PC-9 (cell line): ENCODE measurements at regions of chr2 and their contacts with region 1.

Region 1: DNA sequence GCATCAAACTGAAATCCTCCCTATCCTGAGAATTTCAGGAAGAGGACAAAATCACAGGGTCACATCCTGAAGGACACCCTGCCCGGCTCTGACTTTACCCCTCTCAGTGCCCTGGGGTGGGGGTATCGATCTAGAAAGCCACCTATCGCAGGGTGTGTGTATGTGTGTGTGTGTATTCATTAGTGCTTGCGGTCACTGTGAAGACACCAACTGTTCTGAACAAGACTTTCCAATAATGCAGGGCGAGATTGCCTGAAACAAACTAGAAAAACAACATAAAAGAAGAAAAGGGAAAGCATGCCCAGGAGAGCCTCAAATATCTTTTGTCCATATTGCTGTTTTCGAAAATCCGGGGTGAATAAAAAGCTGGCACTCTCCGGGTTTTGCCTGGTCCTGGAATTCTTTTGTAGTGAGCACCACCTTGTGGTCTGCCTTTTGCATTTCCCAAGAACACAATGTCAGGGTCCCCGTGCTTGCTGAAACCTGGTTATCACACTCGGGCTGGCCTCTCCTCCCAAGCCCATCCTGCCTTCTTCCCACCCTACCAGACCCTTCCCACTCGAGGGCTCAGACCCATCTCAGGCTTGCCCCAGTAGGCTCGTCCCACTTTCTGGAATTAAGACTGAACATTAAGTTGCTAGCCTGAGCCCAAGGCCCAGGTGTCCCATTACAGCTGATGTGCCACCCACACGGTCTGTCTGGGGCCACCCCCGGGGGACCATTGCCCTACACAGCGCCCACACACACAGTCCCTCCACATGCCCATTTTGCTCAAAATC is 25.0 kb upstream of the COPS8 start:
- DNase-seq: peak; percentile 55 to 61
- H3K4me3 ChIP-seq: no peak overlapping the region
- H3K27ac ChIP-seq: no peak overlapping the region
- H3K4me1 ChIP-seq: no peaks in the 10 kb centered on the region
- H3K27me3 ChIP-seq: peaks cover 49% of the 10 kb centered on the region
- CTCF ChIP-seq: peak; percentile 83

Region 2: GRCh38 chr2:235779444-235779896 is 1281.3 kb before region 1 on chr2:
- CTCF ChIA-PET with region 1: interaction called, 3 read pairs
- POLR2A ChIA-PET with region 1: no interaction called
- intact Hi-C with region 1: loop called (anchors 5 kb)
- DNase-seq: peak; percentile 66 to 87
- H3K4me3 ChIP-seq: no peak overlapping the region
- H3K27ac ChIP-seq: no peak overlapping the region
- H3K4me1 ChIP-seq: no peaks in the 10 kb centered on the region
- H3K27me3 ChIP-seq: no peaks in the 10 kb centered on the region
- CTCF ChIP-seq: peak; percentile 93

Region 3: DNA sequence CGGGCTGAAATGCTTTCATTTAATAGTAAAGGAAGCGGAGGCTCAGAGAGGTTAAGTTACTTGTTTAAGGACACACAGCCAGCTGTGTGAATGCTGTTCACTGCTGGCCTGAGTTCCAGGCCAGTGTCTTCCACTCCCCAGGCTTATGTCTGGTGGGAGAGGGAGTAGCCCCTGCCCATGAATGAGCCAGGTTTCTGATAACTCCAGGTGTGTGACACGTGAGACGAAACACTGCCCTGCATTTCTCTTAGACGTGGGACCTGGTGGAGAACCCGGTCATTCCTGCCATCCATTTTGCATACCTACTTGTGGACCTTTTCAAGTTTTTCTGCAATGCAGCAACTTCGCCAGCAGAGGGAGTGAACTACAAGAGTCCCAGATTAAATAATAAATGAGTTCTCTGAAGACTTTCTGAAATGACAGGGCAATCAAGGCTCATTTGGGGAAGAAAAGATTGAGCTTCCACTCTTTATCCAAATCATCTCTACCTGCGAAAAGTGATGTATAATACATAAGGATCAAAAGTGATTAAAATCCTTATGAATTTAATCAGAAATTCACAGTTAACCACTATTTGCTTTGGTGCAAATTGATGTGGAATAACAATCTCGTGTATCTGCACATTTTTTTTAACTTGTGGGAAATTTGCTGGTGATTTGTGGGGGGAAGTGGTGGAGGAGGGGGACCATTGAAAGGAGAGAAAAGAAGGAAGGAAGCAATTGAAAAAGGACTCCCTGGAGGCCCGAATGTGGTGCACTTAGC is 717.1 kb before region 1 on chr2:
- CTCF ChIA-PET with region 1: interaction called, 4 read pairs
- POLR2A ChIA-PET with region 1: no interaction called
- intact Hi-C with region 1: loop called (anchors 1 kb)
- DNase-seq: peak; percentile 60 to 65
- H3K4me3 ChIP-seq: no peak overlapping the region
- H3K27ac ChIP-seq: no peak overlapping the region
- H3K4me1 ChIP-seq: no peaks in the 10 kb centered on the region
- H3K27me3 ChIP-seq: peaks cover 84% of the 10 kb centered on the region
- CTCF ChIP-seq: peak; percentile 95

Region 4: GRCh38 chr2:236352761-236353593 is 707.7 kb before region 1 on chr2:
- CTCF ChIA-PET with region 1: interaction called, 4 read pairs
- POLR2A ChIA-PET with region 1: no interaction called
- intact Hi-C with region 1: loop called (anchors 1 kb)
- DNase-seq: peak in 1 of 2 experiments; percentile 27
- H3K4me3 ChIP-seq: no peak overlapping the region
- H3K27ac ChIP-seq: no peak overlapping the region
- H3K4me1 ChIP-seq: no peaks in the 10 kb centered on the region
- H3K27me3 ChIP-seq: peaks cover 48% of the 10 kb centered on the region
- CTCF ChIP-seq: peak; percentile 98

Region 5: DNA sequence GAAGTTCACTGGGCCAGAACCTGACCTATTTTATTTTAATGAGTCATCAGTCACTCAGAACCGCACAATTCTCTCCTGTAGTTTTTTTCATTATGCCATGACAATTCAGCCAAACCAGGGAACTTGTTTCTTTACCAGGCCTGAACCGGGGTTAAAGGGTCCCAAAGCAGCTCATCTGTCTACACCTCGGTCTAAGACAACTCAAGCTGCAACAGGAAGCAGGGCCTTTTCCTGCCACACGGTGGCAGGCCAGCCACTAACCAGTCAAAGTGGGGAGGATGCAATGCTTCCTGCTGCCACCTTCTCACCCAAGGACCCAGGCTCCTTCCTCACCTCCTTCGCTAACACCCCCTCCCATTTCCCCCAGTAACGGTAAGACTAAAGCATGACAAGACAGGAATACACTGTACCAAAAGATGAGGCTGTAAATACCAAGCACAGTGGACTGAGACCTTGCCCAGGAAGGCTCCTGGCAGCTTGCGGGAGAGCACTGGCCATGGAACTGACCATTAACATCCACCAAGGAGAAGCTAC is 547.8 kb before region 1 on chr2:
- CTCF ChIA-PET with region 1: no interaction called
- POLR2A ChIA-PET with region 1: no interaction called
- intact Hi-C with region 1: loop called (anchors 1 kb)
- DNase-seq: peak; percentile 30 to 33
- H3K4me3 ChIP-seq: no peak overlapping the region
- H3K27ac ChIP-seq: no peak overlapping the region
- H3K4me1 ChIP-seq: no peaks in the 10 kb centered on the region
- H3K27me3 ChIP-seq: peaks cover 33% of the 10 kb centered on the region
- CTCF ChIP-seq: peak; percentile 72

Region 6: DNA sequence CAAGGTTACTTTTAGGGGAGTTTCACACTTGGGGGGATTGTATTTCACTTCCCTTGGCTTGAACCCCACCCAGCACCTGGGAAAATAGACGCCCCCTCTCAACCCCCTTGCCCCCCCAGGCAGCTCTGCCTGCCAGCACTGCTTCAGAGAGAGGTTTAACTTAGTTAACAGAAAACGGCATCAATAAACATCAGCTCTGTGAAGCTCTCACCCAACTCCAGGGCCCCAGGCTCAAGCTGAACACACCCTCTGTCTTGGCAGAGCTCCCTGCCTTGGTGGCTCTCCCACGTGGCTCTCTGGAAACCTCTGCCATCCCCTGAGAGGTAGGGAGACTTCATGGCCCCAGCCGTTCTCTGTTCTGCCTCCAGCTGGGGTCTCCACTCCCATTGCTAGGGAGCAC is 247.0 kb before region 1 on chr2:
- CTCF ChIA-PET with region 1: no interaction called
- POLR2A ChIA-PET with region 1: no interaction called
- intact Hi-C with region 1: no loop called
- DNase-seq: no peak
- H3K4me3 ChIP-seq: no peak overlapping the region
- H3K27ac ChIP-seq: no peak overlapping the region
- H3K4me1 ChIP-seq: peaks cover 20% of the 10 kb centered on the region
- H3K27me3 ChIP-seq: peaks cover 30% of the 10 kb centered on the region
- CTCF ChIP-seq: no peak